ENCODE measurements at regions of chr6 and their contacts with region 1.

Region 1: DNA sequence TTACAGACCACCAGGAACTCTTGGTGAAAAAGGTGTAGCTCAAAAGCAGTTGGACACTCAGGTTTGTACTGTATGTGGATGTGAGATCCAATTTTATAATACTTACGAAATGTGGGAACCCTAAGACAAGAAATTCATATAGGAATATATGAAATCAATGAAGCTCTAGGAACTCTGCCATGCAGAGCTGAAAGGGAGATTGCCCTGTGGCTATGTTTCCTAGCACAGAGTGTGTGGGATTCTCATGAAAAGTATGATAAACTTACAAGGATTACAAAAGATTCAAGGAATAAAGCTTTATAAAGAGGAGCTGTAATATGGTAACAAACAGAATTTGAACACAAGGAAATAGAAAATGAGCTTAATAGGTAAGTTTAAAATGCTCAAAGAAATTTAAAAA is 205.7 kb upstream of the FAM83B start:
- DNase-seq: no peak
- CTCF ChIP-seq: no peak

Region 2: GRCh38 chr6:54629131-54629530 is 11.8 kb before region 1 on chr6:
- CTCF ChIA-PET with region 1: interaction called, 10 read pairs
- POLR2A ChIA-PET with region 1: no interaction called
- DNase-seq: no peak
- CTCF ChIP-seq: no peak

Region 3: GRCh38 chr6:55058701-55059100 is 417.8 kb after region 1 on chr6:
- CTCF ChIA-PET with region 1: no interaction called
- POLR2A ChIA-PET with region 1: no interaction called
- DNase-seq: no peak
- CTCF ChIP-seq: no peak